Activated B cell treated with CpG ODN at 0.5 μM for 24 hours (primary cell): ENCODE measurements at regions of chr7 and their contacts with region 1.

Region 1: GRCh38 chr7:130896898-130897514 is 163.0 kb upstream of the KLF14 start:
- DNase-seq: peak; percentile 54
- ATAC-seq: peak; percentile 64
- H3K4me3 Mint-ChIP-seq: peak overlapping the region; percentile 59
- H3K27ac Mint-ChIP-seq: peak overlapping the region; percentile 84
- H3K4me1 Mint-ChIP-seq: peaks cover 85% of the 10 kb centered on the region
- H3K27me3 Mint-ChIP-seq: no peaks in the 10 kb centered on the region
- CTCF ChIP-seq: peak; percentile 51

Region 2: GRCh38 chr7:130912862-130913631 is 16.0 kb after region 1 on chr7:
- CTCF ChIA-PET with region 1: interaction called, 10 read pairs
- POLR2A ChIA-PET with region 1: interaction called, 7 read pairs
- intact Hi-C with region 1: loop called (anchors 1 kb)
- DNase-seq: peak; percentile 54
- ATAC-seq: peak; percentile 91
- H3K4me3 Mint-ChIP-seq: peak overlapping the region; percentile 87
- H3K27ac Mint-ChIP-seq: peak overlapping the region; percentile 90
- H3K4me1 Mint-ChIP-seq: peaks cover 86% of the 10 kb centered on the region
- H3K27me3 Mint-ChIP-seq: no peaks in the 10 kb centered on the region
- CTCF ChIP-seq: no peak

Region 3: DNA sequence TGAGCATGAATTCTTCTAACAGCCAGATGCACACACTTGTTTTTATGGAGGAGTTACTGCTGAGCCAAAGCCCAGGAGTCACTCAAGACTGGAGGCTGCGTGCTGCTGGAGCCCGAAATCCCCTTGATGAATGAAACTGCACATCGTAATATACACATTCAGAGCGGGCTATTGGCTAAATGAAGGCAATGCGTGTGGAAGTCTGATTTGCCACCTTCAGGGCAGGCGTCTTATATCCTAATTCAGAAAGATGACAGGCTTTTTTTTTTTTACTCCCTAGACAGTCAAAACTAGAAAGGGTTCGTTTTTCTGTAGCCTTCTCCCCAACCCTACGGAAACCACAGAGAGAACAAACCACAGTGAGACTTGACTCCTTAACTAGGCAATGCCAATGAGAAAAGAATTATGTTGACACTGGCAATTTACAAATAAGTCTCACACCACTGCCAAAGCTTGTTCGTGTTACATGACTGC is 64.2 kb after region 1 on chr7:
- CTCF ChIA-PET with region 1: interaction called, 11 read pairs
- POLR2A ChIA-PET with region 1: interaction called, 13 read pairs
- intact Hi-C with region 1: loop called (anchors 1 kb)
- DNase-seq: peak; percentile 54
- ATAC-seq: peak; percentile 78
- H3K4me3 Mint-ChIP-seq: peak overlapping the region; percentile 87
- H3K27ac Mint-ChIP-seq: peak overlapping the region; percentile 98
- H3K4me1 Mint-ChIP-seq: peaks cover 69% of the 10 kb centered on the region
- H3K27me3 Mint-ChIP-seq: no peaks in the 10 kb centered on the region
- CTCF ChIP-seq: no peak

Region 4: GRCh38 chr7:131040467-131040932 is 143.5 kb after region 1 on chr7:
- CTCF ChIA-PET with region 1: interaction called, 111 read pairs
- POLR2A ChIA-PET with region 1: interaction called, 9 read pairs
- intact Hi-C with region 1: loop called (anchors 1 kb)
- DNase-seq: no peak
- ATAC-seq: peak; percentile 75
- H3K4me3 Mint-ChIP-seq: peak overlapping the region; percentile 60
- H3K27ac Mint-ChIP-seq: peak overlapping the region; percentile 81
- H3K4me1 Mint-ChIP-seq: peaks cover 56% of the 10 kb centered on the region
- H3K27me3 Mint-ChIP-seq: no peaks in the 10 kb centered on the region
- CTCF ChIP-seq: peak; percentile 61

Region 5: DNA sequence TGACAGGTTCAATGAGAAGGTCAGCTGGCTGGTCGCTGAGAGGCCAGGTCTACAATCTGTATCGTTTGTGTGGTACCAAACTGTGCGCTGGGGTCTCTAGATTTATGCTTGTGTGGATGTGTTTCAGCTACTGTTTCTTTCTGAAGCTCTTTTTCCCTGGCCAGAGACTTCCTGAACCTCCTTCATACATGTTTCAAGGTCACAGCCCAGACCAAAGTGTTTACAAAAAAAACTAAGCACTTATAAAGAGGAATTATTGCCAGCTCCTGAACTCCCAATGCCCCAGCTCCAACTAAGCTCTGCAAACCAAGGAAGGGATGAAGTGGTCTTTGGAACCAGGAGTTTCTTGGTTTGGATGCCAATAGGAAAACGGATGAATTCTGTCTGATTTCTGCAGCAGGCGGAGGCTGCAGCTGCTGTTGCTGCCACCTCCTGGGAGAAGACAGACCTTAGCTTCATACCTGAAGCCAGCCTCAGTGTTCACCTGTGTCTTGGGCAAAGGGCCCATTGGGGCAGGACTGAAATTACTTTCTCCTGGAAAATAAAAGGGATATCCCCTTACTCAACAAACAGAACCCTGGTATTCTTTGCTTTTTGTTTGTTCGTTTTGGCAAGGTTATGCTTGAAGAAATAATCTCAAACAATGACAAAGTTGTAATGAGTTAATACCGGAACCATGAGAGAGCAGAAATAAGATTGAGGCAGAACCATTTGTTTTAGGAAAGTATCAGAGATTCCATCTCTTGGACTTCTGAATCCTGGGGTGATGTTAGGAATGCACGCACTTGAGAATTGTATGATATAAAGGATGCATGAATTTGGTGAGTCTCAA is 406.1 kb after region 1 on chr7:
- CTCF ChIA-PET with region 1: no interaction called
- POLR2A ChIA-PET with region 1: no interaction called
- intact Hi-C with region 1: loop called (anchors 2 kb)
- DNase-seq: no peak
- ATAC-seq: no peak
- H3K4me3 Mint-ChIP-seq: no peak overlapping the region
- H3K27ac Mint-ChIP-seq: no peak overlapping the region
- H3K4me1 Mint-ChIP-seq: no peaks in the 10 kb centered on the region
- H3K27me3 Mint-ChIP-seq: no peaks in the 10 kb centered on the region
- CTCF ChIP-seq: no peak

Region 6: GRCh38 chr7:131513245-131514061 is 616.4 kb after region 1 on chr7:
- CTCF ChIA-PET with region 1: no interaction called
- POLR2A ChIA-PET with region 1: no interaction called
- intact Hi-C with region 1: loop called (anchors 1 kb)
- DNase-seq: peak; percentile 60
- ATAC-seq: peak; percentile 97
- H3K4me3 Mint-ChIP-seq: no peak overlapping the region
- H3K27ac Mint-ChIP-seq: no peak overlapping the region
- H3K4me1 Mint-ChIP-seq: peaks cover 16% of the 10 kb centered on the region
- H3K27me3 Mint-ChIP-seq: peaks cover 3% of the 10 kb centered on the region
- CTCF ChIP-seq: peak; percentile 53